ENCODE measurements at regions of chr3 and their contacts with region 1.

Region 1: GRCh38 chr3:124014366-124014942 is 22.5 kb upstream of the ROPN1 start:
- DNase-seq: no peak
- H3K4me3 ChIP-seq: no peak overlapping the region
- CTCF ChIP-seq: no peak

Region 2: DNA sequence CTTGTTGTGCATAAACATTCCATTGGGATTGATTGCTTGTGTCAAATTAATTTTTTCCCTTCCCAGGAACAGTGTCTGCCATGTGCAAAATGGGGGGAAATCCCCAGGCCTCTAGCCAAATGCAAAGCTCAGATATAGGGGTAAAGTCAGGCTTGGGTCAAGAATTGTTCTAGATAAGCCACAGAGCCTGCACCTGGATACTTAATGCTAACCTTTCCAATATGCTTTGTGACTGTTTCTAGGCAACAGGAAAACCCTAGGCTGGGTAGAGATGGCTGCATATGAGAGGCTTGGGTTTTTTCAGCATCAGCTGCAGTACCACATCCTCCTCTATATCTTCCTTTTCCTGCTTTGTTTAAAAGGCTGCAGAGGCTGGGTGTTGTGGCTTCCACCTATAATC is 39.4 kb after region 1 on chr3:
- CTCF ChIA-PET with region 1: no interaction called
- POLR2A ChIA-PET with region 1: no interaction called
- DNase-seq: no peak
- H3K4me3 ChIP-seq: no peak overlapping the region
- CTCF ChIP-seq: no peak

Region 3: DNA sequence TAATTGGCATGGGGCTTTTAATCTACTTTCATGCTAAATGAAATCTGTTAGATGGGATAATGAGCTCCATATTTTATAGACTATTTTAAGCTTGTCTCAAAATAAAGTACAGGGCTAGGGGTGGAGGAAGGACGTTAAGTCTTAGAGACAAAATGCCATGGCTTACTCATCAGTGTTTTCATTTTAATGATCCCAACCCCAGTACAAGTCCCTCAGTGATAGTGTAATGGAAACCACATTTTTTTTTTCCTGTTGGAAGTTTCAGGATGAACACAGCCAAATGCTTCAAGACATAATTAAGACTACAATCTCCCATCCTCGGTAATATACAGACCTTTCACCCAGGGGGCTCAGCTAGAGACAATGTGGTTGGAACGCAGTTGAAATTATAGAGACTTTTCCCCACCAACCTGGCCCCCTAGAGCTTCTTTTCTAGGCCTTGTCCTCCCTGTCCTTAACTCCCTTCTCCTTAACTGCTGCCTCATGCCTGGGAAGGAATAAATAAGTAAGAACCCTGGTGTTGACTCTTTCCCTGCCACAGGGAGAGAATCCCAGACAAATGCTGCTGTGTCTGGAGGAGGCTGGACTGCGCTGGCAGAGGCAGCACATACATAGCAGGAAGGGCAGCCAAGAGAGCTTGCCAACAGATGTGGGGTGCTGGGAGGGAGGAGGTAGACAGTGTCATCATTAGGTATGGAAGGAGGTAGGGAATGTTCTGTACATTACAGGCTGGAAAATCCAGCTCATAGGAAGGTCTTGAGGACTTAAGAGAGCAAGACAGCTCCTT is 92.8 kb after region 1 on chr3:
- CTCF ChIA-PET with region 1: no interaction called
- POLR2A ChIA-PET with region 1: no interaction called
- DNase-seq: no peak
- H3K4me3 ChIP-seq: no peak overlapping the region
- CTCF ChIP-seq: no peak

Region 4: DNA sequence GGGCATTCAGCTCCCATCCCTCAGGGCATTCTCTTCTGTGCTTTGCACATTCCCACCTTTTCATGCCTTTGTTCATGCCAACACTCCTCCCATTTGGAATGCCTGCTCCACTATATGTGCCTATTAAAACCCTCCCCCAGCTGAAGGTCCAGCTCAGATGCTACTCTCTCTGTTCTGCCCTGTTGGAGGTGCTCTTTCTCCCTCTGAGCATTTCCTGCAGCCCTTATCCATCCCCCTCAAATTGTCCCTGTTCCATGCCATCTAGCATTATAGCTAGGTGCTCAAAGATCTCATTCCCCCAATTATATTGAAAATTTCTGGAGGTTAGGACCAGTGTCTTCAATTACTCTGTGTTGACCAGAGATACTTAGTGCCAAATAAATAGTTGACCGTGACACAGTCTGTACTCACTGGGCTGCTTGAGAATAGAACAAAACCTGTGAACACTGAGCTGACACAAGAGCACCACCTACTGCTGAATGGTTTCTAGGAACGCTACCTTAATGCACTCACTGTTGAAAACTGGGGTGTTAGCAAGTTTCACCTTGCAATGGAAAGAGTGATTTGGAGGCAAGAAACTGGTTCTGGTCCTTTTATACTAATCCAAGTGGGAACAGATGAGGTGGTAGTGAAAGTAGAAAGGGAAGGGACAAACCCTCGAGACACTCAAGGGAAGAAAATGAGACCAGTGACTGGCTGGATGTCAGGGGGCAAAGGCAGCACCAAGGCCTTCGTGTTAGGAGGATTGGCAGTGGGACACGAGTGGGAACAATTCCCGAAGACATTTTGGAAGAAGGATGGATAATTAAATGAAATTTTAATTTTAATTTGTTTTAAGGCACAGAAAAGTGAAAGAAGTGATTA is 267.2 kb after region 1 on chr3:
- CTCF ChIA-PET with region 1: interaction called, 97 read pairs
- POLR2A ChIA-PET with region 1: no interaction called
- DNase-seq: no peak
- H3K4me3 ChIP-seq: no peak overlapping the region
- CTCF ChIP-seq: peak; percentile 58

Region 5: GRCh38 chr3:124569761-124570160 is 555.3 kb after region 1 on chr3:
- CTCF ChIA-PET with region 1: no interaction called
- POLR2A ChIA-PET with region 1: no interaction called
- DNase-seq: no peak
- H3K4me3 ChIP-seq: no peak overlapping the region
- CTCF ChIP-seq: no peak

Measured in AG04449 (cell line).